Panc1 (cell line): ENCODE measurements at regions of chr2 and their contacts with region 1.

Region 1: DNA sequence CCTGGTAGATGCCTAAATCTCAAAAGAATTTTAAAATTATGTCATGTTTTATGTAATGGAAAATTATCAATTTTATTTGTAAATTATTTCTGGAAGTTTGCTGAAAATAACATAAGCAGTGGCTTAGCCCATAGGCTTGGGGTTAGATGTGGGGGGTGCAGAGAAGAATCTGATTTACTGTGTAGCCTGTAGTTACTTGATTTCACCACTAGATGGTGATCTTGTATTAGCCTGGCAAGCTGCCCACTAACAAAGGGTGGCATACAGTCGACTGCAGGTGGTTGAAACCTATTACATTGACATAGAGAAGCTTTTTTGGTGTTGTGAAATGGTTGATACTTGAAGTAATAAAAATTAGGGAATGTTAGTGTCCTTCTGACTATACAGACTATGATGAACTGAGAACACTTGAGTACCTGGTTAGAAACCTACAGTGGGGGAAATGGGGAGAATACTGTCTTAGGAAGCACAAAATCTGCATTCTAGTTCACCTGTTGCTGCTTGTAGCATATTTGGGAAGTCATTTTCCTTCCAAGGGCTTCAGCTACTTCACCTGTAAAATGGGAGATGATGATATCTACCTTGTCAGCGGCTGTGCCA is 191.0 kb upstream of the LHCGR start:
- DNase-seq: peak; percentile 28
- ATAC-seq: peak; percentile 91
- H3K4me3 ChIP-seq: no peak overlapping the region
- H3K27ac ChIP-seq: no peak overlapping the region
- H3K4me1 ChIP-seq: no peaks in the 10 kb centered on the region
- H3K27me3 ChIP-seq: peaks cover 3% of the 10 kb centered on the region; the same call in 1 of the 2 replicates
- CTCF ChIP-seq: peak; percentile 86

Region 2: GRCh38 chr2:49490710-49491109 is 544.2 kb after region 1 on chr2:
- CTCF ChIA-PET with region 1: no interaction called
- POLR2A ChIA-PET with region 1: no interaction called
- in situ Hi-C with region 1: no loop called
- intact Hi-C with region 1: loop called (anchors 10 kb)
- DNase-seq: peak; percentile 12
- ATAC-seq: peak; percentile 45; the same call in 1 of the 2 replicates
- H3K4me3 ChIP-seq: no peak overlapping the region
- H3K27ac ChIP-seq: no peak overlapping the region
- H3K4me1 ChIP-seq: no peaks in the 10 kb centered on the region
- H3K27me3 ChIP-seq: no peaks in the 10 kb centered on the region
- CTCF ChIP-seq: peak; percentile 66